ENCODE measurements at regions of chr2 and their contacts with region 1.

Region 1: DNA sequence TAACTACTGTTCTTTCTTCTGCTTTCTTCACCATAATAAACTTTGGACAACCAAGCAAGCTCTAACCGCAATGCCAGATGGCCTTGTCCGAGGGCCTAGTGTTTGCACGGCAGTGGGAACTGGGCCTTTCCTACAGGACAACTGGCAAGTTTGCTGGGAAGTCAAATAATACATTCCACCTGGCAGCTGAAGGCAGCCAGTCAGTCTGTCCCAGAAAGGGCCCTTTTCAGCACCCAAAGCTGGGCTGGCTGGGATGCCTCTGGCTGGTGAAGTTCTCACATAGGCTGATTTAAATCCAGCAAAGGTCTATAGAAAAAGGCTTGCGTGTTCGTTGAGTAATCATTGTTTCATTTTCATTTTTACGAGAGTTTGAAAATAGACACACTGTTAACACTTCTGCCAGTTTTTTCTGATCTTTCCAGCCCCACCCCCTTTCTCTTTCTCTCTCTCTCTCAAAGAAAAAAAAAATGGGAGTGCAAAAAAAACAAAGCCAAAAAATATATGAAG is 110.0 kb upstream of the EPAS1 start:
- DNase-seq: peak; percentile 19
- H3K4me3 Mint-ChIP-seq: peak overlapping the region; percentile 65
- H3K27ac Mint-ChIP-seq: peak overlapping the region; percentile 87
- H3K4me1 Mint-ChIP-seq: peaks cover 24% of the 10 kb centered on the region
- H3K27me3 Mint-ChIP-seq: no peaks in the 10 kb centered on the region

Region 2: DNA sequence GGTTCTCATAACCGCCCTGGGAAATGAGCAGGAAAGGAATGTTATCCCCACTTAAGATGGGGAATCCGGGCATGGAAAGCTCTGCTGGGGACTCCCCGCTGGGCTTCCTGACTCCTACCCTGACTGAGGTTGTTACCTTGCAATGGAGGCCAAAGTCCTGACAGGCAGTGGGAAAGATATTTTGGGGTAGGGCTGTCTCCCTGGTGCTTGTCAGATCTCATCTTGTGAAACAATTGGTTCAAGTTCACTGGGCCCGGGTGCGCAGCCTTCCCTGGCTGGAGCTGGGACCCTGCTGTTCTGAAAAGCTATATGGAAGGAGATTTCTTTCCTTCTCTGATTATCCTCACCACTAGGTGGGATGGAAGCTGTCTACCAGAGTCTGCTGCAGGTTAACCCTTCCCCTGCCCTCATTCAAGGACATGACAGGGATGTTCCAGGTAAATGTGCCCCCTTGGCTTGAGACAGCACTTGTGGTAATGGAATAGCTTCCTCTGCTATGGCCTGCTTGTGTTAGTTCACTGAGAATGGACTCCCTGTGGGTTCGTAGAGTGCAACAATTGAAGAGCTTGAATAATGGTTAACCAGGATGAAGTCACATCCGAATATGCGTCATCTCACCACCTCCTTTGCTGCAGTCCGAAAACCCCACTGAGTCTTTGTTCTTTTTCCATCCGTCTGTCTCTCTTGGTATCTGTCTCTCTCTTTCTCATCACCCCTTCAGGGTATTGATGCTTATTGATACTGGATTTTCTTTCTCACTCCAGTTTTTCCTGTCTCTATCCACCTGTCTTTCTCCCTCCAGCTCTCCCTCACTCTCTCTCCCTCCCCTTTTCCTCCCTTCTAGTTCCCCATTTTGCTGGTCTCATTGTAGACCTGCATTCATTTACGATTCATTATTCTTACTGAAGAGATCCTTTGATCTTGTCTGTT is 42.2 kb after region 1 on chr2:
- intact Hi-C with region 1: loop called (anchors 2 kb)
- DNase-seq: peak; percentile 38
- H3K4me3 Mint-ChIP-seq: peak overlapping the region; percentile 53
- H3K27ac Mint-ChIP-seq: peak overlapping the region; percentile 90
- H3K4me1 Mint-ChIP-seq: peaks cover 56% of the 10 kb centered on the region
- H3K27me3 Mint-ChIP-seq: peaks cover 9% of the 10 kb centered on the region

Region 3: DNA sequence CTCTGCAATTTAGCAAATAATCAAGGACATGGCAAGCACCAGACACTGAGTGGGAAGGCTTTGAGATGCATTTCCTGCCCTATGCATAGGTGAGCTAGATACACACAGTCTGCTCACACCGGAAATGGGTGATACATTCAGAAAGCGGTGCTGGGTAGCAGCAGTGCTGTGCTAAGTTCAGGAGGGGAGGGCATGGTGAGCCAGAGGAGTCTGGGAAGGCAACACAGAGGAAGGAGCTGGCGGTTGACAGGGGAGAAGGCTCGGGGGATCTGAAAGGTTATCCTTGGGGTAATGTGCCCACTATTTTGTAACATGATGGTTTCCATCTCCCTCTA is 52.6 kb after region 1 on chr2:
- intact Hi-C with region 1: loop called (anchors 1 kb)
- DNase-seq: peak; percentile 61
- H3K4me3 Mint-ChIP-seq: peak overlapping the region; percentile 6
- H3K27ac Mint-ChIP-seq: peak overlapping the region; percentile 89
- H3K4me1 Mint-ChIP-seq: peaks cover 49% of the 10 kb centered on the region
- H3K27me3 Mint-ChIP-seq: peaks cover 3% of the 10 kb centered on the region

Region 4: DNA sequence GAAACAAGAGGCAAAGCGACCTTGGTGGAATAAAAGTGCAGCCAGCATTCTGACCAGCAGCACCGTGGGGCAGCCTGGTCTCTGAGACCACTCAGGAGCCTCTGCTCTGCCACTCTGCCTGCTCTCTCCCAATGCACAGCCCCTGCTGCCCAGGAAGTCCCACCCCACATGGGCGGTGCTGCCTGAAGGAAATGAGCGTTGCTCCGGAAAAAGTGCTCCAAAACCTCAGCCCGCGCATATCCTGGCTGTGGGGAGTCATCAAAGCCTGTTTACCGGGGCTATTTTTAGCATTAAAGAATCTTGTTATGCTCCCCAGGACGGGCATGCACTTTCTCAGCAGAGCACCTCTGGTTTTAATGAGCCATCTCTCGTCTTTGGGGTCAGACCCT is 164.6 kb after region 1 on chr2:
- intact Hi-C with region 1: loop called (anchors 5 kb)
- DNase-seq: peak; percentile 69
- H3K4me3 Mint-ChIP-seq: peak overlapping the region; percentile 80
- H3K27ac Mint-ChIP-seq: peak overlapping the region; percentile 95
- H3K4me1 Mint-ChIP-seq: peaks cover 84% of the 10 kb centered on the region
- H3K27me3 Mint-ChIP-seq: no peaks in the 10 kb centered on the region